ENCODE measurements at regions of chr9 and their contacts with region 1.

Region 1: GRCh38 chr9:97921959-97922724 is at the start of gene TRMO:
- DNase-seq: peak; percentile 96
- H3K4me3 ChIP-seq: peak within 1 kb of the TSS; percentile 58 to 85 (median 67)
- H3K27ac ChIP-seq: peak within 1 kb of the TSS; percentile 88
- H3K4me1 ChIP-seq: peaks cover 9% of the 10 kb centered on the region
- H3K27me3 ChIP-seq: no peaks in the 10 kb centered on the region
- CTCF ChIP-seq: peak; percentile 30 to 72
- total RNA-seq, gene TRMO: 7.6 to 15.3 TPM

Region 2: DNA sequence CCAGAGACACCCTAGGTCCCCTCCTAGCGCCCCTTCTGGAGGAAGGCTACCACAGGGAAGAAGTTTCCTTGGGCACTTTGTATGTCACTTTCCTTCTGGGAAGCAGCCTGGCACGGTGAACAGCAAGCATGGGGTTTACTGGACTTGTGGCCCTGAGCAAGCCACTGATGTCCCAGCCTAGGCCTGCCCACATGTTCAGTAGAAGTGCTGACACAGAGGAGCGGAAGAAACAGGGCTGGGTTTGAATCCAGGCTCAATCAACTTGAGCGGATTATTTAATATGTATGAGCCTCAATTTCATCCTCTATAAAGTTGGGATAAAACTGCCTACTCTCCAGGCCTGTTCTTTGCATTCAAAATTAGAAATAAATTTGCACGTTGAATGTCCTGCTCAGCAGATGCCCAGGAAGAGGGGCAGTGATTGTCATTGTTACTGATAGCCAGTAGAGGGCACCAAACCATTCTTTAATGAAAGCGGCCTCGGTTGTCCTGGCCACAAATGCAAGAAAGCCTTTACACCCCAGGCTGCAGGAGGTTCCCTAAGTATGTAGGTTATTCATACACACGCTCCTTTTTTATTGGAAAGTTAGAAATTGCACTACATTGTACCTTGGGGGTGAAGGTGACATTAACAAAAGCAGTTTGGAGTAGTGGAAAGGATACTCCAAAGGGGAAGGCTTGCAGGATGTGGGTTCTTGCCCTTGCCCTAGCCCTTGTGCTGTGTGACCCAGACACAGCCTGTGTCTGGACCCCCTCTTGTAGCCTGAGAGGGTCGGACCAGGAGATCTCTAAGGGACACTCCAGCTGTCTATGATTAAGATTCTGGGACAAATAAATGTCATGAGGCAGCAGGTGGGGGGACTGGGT is 211.6 kb before region 1 on chr9:
- CTCF ChIA-PET with region 1: no interaction called
- dilution Hi-C with region 1: no loop called
- in situ Hi-C with region 1: no loop called
- intact Hi-C with region 1: loop called (anchors 1 kb)
- DNase-seq: peak; percentile 59
- H3K4me3 ChIP-seq: no peak overlapping the region
- H3K27ac ChIP-seq: no peak overlapping the region
- H3K4me1 ChIP-seq: peaks cover 24% of the 10 kb centered on the region
- H3K27me3 ChIP-seq: peaks cover 10% of the 10 kb centered on the region
- CTCF ChIP-seq: peak; percentile 74 to 79

Region 3: GRCh38 chr9:97906236-97906831 is 15.8 kb before region 1 on chr9:
- CTCF ChIA-PET with region 1: interaction called, 15 read pairs
- dilution Hi-C with region 1: no loop called
- in situ Hi-C with region 1: no loop called
- intact Hi-C with region 1: no loop called
- DNase-seq: no peak
- H3K4me3 ChIP-seq: no peak overlapping the region
- H3K27ac ChIP-seq: no peak overlapping the region
- H3K4me1 ChIP-seq: peaks cover 21% of the 10 kb centered on the region
- H3K27me3 ChIP-seq: no peaks in the 10 kb centered on the region
- CTCF ChIP-seq: no peak

Region 4: DNA sequence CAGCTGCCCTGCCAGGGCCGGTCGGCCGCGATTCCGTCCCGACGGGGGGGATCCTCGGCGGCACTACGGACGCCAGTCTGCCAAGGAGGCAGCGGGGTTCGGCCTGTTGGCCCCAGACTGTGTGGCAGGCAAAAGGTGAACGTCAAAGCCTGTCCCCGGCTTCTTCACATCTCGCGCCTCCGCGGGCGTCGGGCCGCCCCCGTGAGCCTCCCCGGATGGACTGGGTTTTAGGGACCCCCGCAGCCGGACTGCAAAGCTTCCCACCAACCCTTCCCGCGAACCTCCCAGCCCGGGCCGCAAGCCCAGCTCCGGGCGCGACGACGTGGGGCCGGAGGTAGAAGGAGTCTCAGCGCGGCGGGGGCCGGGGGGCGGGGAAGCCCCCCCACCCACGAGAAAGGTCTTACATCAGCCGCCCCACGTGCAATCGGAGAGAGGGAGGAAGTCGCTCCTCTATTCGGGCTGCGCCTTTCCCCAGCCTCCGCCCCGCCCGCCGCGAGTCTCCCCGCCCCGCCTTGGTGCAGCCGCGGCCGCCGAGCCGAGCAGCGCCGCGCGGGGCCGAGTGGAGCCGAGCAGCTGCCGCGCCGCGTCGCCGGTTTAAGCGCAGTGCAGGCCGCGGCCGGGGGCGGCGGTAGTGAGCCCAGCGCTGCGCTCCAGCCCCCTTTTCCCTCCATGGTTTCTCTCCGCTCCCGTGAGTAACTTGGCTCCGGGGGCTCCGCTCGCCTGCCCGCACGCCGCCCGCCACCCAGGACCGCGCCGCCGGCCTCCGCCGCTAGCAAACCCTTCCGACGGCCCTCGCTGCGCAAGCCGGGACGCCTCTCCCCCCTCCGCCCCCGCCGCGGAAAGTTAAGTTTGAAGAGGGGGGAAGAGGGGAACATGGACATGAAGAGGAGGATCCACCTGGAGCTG is 60.8 kb after region 1 on chr9 and contains the start of gene ANP32B:
- CTCF ChIA-PET with region 1: interaction called, 7 read pairs
- dilution Hi-C with region 1: no loop called
- in situ Hi-C with region 1: no loop called
- intact Hi-C with region 1: loop called (anchors 2 kb)
- DNase-seq: peak; percentile 86
- H3K4me3 ChIP-seq: peak within 1 kb of the TSS; percentile 82 to 90 (median 88)
- H3K27ac ChIP-seq: peak within 1 kb of the TSS; percentile 94
- H3K4me1 ChIP-seq: peaks cover 43% of the 10 kb centered on the region
- H3K27me3 ChIP-seq: no peaks in the 10 kb centered on the region
- CTCF ChIP-seq: peak; percentile 65 to 70
- total RNA-seq, gene ANP32B: 8.2 to 164 TPM

Region 5: DNA sequence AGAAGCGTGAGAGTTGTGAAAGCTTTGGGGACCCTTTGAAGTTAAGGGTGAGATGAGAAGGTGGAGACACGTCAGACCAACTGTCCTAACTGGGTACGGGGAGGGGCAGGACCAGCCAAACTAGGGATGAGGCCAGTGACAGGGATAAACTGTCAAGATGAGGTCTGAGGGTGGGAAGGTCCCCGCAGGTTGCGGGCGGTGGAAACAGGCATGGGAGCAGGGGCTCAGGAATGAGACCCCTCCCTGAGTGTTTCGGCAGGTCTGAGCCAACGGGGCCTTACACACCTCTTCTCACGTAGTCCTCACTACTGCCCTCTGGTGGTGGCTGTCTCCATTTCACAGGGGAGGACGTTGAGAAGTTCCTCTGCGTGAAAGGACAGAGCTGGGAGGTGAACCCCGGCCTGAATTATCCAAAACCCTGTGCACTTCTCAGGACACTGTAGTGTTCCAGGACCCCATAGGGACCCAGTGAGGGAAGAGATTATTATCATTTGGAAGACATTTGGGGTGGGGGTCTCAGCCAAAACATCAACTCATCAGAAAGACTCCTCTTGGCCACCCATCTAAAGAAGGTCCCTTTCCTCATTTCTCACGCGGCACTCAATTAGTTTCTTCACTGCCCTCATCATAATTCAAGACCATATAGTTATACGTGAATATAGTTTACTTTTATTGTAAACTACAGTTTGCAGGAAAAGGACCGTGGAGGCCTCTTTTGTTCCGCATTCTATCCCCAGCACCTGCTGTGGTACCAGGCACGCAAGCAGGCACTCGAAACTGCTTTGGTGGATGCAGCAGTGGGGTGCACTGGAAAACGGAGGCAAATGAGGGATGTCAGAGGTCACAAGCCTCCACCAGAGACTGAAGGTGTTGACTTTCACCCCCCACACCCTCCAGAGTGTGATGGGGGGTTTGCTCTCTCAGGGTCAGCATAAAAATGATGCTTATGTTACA is 112.7 kb after region 1 on chr9:
- CTCF ChIA-PET with region 1: interaction called, 3 read pairs
- dilution Hi-C with region 1: no loop called
- in situ Hi-C with region 1: no loop called
- intact Hi-C with region 1: loop called (anchors 1 kb)
- DNase-seq: peak; percentile 50
- H3K4me3 ChIP-seq: no peak overlapping the region
- H3K27ac ChIP-seq: no peak overlapping the region
- H3K4me1 ChIP-seq: peaks cover 8% of the 10 kb centered on the region
- H3K27me3 ChIP-seq: no peaks in the 10 kb centered on the region
- CTCF ChIP-seq: peak; percentile 85

Region 6: GRCh38 chr9:98192503-98193335 is 270.6 kb after region 1 on chr9 and contains the start of gene CORO2A:
- CTCF ChIA-PET with region 1: no interaction called
- dilution Hi-C with region 1: no loop called
- in situ Hi-C with region 1: no loop called
- intact Hi-C with region 1: loop called (anchors 1 kb)
- DNase-seq: peak; percentile 83
- H3K4me3 ChIP-seq: peak within 1 kb of the TSS; percentile 69 to 85 (median 70)
- H3K27ac ChIP-seq: peak within 1 kb of the TSS; percentile 41
- H3K4me1 ChIP-seq: peaks cover 16% of the 10 kb centered on the region
- H3K27me3 ChIP-seq: no peaks in the 10 kb centered on the region
- CTCF ChIP-seq: peak; percentile 15 to 57
- total RNA-seq, gene CORO2A: 9.7 to 19.7 TPM

Region 7: GRCh38 chr9:98263482-98264357 is 341.6 kb after region 1 on chr9:
- CTCF ChIA-PET with region 1: no interaction called
- dilution Hi-C with region 1: no loop called
- in situ Hi-C with region 1: loop called in 1 of 2 experiments (anchors 25 kb)
- intact Hi-C with region 1: loop called (anchors 1 kb)
- DNase-seq: peak; percentile 51
- H3K4me3 ChIP-seq: no peak overlapping the region
- H3K27ac ChIP-seq: no peak overlapping the region
- H3K4me1 ChIP-seq: no peaks in the 10 kb centered on the region
- H3K27me3 ChIP-seq: peaks cover 2% of the 10 kb centered on the region
- CTCF ChIP-seq: peak; percentile 98